OCI-LY7 (cell line): ENCODE measurements at regions of chr5 and their contacts with region 1.

Region 1: DNA sequence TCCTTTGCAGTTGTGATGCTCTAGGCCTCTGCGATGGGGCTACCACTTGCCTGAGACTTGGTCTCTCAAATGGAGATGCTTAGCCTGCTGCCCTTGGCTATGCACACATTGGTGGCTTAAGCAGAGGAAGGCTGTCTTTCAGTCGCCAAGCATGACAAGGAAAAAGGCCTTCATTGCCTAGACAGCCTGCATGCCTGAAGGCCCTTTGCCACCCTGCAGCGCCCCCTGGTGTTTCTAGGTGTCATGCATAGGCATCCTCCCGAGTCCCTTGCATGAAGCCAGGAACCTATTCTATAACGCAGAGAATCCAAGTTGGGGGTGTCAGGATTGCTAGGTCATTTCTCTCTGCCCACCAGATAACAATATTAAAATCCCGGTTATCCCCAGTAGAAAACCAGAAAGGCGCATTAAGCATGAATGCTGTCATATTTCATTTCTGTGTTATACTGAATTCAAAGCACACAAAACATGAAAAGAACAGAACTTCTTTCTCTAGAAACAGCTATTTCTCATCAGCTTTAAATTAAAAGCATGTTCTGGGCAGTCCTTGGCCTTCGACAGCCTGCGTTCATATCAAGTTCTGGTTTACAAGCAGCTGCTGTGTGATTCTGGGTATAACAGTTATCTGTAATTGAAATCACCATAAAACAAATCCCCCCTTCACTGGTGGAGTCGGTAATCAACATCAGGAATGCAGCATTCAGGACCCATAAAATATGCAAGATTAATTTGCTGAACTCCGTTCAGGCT is 59.7 kb upstream of the TRPC7 start:
- DNase-seq: peak; percentile 64
- H3K4me3 ChIP-seq: no peak overlapping the region
- H3K27ac ChIP-seq: no peak overlapping the region
- H3K4me1 ChIP-seq: no peaks in the 10 kb centered on the region
- CTCF ChIP-seq: peak; percentile 87

Region 2: GRCh38 chr5:136222583-136223274 is 202.3 kb before region 1 on chr5:
- CTCF ChIA-PET with region 1: no interaction called
- POLR2A ChIA-PET with region 1: no interaction called
- intact Hi-C with region 1: no loop called
- DNase-seq: no peak
- H3K4me3 ChIP-seq: no peak overlapping the region
- H3K27ac ChIP-seq: no peak overlapping the region
- H3K4me1 ChIP-seq: no peaks in the 10 kb centered on the region
- CTCF ChIP-seq: no peak

Region 3: DNA sequence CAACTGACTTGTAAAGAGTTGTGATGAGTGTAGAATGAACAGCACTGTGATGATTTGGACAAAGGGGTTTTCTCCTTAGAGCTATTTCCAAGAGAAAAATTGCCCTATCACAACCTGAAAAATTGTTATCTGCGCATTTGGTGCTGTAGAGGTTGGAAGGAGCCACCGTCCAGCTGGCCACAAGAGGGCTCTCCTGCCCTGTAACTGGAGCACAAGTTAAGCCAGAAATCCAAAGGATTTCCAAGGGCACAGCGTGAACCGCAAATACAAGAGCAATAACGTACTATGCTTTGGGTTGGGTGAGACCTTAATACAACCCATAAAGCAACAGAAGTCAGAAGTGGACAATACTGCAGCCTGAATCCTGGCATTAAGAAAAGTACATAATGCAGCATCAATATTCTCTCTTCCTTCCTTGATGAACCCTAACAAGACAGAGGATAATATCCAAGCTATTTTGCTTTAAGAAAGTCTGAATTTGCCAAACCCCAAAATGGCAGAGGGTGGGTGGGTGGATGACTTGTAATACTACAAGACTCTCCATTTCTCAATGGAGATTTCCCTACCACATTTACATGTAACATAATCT is 175.2 kb before region 1 on chr5:
- CTCF ChIA-PET with region 1: no interaction called
- POLR2A ChIA-PET with region 1: interaction called, 3 read pairs
- intact Hi-C with region 1: loop called (anchors 1 kb)
- DNase-seq: peak; percentile 26
- H3K4me3 ChIP-seq: no peak overlapping the region
- H3K27ac ChIP-seq: no peak overlapping the region
- H3K4me1 ChIP-seq: no peaks in the 10 kb centered on the region
- CTCF ChIP-seq: peak; percentile 92

Region 4: GRCh38 chr5:137136991-137137632 is 712.1 kb after region 1 on chr5:
- CTCF ChIA-PET with region 1: no interaction called
- POLR2A ChIA-PET with region 1: no interaction called
- intact Hi-C with region 1: no loop called
- DNase-seq: no peak
- H3K4me3 ChIP-seq: no peak overlapping the region
- H3K27ac ChIP-seq: no peak overlapping the region
- H3K4me1 ChIP-seq: peaks cover 11% of the 10 kb centered on the region
- CTCF ChIP-seq: no peak